Common myeloid progenitor, CD34-positive (primary cell): ENCODE measurements at regions of chr2 and their contacts with region 1.

Region 1: GRCh38 chr2:113138428-113139322 is 11.3 kb downstream of the IL1RN start:
- DNase-seq: peak; percentile 82 to 91 (median 82)
- H3K4me3 ChIP-seq: peak overlapping the region in 3 of 7 experiments; percentile 34 to 57 (median 35)
- H3K27ac ChIP-seq: no peak overlapping the region
- H3K4me1 ChIP-seq: peaks cover 0 to 13% (median 1%) of the 10 kb centered on the region in 4 experiments
- H3K27me3 ChIP-seq: no peaks in the 10 kb centered on the region

Region 2: DNA sequence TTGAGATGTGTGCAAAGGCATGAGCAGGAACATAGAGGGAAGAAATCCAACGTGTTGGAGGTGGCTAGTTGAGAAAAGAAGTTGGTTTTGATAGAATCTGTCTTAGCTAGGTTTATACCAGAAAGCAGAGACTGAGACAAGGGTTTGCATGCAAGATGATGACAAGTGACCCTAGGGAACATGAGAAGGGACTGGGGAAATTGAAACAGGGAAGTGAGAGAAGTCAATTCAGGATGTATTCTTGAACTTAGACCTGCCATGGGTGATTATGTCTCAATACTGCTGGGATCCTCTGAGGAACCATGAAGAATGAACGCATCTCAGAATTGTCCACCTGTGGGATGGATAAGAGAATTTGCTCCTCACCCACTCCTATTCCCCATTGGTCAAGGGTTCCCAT is 112.9 kb before region 1 on chr2:
- CTCF ChIA-PET with region 1: no interaction called
- POLR2A ChIA-PET with region 1: no interaction called
- DNase-seq: no peak
- H3K4me3 ChIP-seq: no peak overlapping the region
- H3K27ac ChIP-seq: no peak overlapping the region
- H3K4me1 ChIP-seq: no peaks in the 10 kb centered on the region
- H3K27me3 ChIP-seq: peaks cover 0 to 10% (median 4%) of the 10 kb centered on the region in 5 experiments

Region 3: DNA sequence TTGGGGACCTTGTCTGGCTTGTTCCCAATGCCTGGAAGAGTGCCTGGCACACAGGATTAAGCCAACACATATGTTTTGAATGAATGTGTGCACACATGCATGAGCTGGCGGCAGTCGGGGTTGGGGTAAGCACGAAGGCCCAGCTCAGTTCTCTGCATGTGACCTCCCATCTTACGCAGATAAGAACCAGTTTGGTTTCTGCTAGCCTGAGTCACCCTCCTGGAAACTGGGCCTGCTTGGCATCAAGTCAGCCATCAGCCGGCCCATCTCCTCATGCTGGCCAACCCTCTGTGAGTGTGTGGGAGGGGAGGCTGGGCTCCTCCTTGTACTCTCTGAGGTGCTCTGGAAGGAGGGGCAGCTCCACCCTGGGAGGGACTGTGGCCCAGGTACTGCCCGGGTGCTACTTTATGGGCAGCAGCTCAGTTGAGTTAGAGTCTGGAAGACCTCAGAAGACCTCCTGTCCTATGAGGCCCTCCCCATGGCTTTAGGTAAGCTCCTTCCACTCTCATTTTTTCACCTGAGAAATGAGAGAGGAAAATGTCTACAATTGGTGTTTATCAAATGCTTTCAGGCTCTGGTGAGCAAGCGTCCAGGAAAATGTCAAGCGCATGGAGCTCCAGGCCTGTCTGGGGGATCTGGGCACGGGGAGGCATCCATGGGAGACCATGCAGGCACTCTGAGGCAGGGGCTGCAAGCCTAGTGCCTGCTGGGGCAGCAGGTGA is 21.0 kb before region 1 on chr2:
- CTCF ChIA-PET with region 1: interaction called, 68 read pairs
- POLR2A ChIA-PET with region 1: no interaction called
- DNase-seq: peak in 2 of 3 donors; percentile 51 to 55
- H3K4me3 ChIP-seq: no peak overlapping the region
- H3K27ac ChIP-seq: no peak overlapping the region
- H3K4me1 ChIP-seq: peaks cover 4 to 54% (median 21%) of the 10 kb centered on the region in 4 experiments
- H3K27me3 ChIP-seq: no peaks in the 10 kb centered on the region

Region 4: DNA sequence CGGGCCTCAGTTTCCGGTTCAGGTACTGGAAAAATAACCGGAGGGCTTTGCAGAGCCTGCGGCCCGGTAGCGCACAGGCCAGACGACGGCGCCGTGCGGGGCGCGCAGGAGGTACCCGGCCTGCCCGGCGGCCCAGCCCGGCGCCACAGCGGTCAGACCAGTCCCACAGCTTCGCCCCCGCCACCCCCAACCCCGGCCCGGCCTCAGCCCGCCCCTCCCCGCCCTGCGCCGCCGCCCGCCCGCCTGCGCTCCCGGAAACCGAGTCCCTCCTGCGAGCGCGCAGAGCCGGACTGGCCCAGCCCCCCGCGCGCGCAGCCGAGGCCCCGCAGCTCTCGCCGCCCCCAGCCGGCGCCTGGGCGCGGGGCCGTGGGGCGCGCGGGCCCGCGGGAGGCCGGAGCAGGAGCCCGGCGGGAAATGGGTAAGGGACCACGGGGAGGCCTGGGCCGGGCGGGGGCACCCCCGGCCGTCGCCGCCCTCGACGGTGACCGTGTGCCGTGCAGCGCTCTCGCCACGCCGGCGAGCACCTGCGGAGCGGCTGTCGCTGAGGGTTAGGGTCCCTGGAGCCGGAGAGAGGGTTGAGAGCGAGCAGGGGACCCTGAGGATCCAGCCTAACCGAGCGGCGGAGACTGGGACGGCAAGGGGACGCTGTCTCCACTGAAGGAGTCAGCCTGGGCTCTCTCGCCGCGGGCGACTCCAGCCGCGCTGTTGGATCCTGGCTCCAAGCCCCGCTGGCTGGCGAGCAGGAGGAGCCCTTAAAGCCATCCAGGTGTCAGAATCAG is 18.6 kb after region 1 on chr2:
- CTCF ChIA-PET with region 1: interaction called, 40 read pairs
- POLR2A ChIA-PET with region 1: no interaction called
- DNase-seq: peak in 2 of 3 donors; percentile 31 to 56
- H3K4me3 ChIP-seq: peak overlapping the region; percentile 40 to 74 (median 69)
- H3K27ac ChIP-seq: no peak overlapping the region
- H3K4me1 ChIP-seq: peaks cover 6 to 14% (median 9%) of the 10 kb centered on the region in 4 experiments
- H3K27me3 ChIP-seq: no peaks in the 10 kb centered on the region

Region 5: GRCh38 chr2:113181258-113182051 is 42.8 kb after region 1 on chr2:
- CTCF ChIA-PET with region 1: interaction called, 93 read pairs
- POLR2A ChIA-PET with region 1: no interaction called
- DNase-seq: peak in 2 of 3 donors; percentile 71 to 82
- H3K4me3 ChIP-seq: peak overlapping the region in 3 of 7 experiments; percentile 9 to 34 (median 15)
- H3K27ac ChIP-seq: no peak overlapping the region
- H3K4me1 ChIP-seq: peaks cover 3 to 44% (median 37%) of the 10 kb centered on the region in 4 experiments
- H3K27me3 ChIP-seq: no peaks in the 10 kb centered on the region

Region 6: DNA sequence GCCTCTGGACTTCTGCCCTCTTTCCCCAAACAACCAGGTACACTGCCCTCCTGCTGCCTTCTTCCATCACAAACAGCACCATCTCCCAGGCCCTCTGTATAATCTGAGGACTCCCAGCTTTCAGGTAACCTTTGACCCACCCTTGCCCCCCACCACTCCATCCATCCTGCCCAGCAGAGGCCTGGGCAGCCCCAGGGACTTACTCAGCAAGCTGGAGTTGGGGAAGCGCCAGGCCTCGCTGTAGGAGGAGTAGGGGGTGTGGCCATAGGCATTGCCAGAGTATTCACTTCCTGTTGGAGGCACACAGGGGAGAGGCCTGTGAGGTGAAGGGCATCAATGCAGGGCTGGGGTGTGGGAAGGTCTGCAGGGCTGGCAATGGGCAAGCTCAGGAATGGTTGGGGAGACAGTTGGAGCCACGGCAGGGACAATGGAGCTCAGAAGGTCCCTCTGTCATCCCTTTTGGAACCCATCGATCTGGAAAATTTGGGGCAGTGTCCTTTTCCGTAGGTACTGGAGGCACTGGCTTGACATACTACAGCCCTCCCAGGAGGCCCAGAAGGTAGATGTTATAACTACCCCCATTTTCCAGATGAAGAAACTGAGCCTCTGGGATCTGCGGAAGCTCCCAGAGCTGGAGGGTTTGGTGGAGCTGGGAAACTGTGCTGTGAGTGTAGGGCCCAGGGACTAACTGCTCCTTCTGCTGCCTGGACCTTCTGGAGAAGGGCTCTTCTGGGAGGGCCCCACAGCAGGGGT is 81.4 kb after region 1 on chr2:
- CTCF ChIA-PET with region 1: interaction called, 12 read pairs
- POLR2A ChIA-PET with region 1: no interaction called
- DNase-seq: peak in 2 of 3 donors; percentile 50 to 54
- H3K4me3 ChIP-seq: no peak overlapping the region
- H3K27ac ChIP-seq: no peak overlapping the region
- H3K4me1 ChIP-seq: peaks cover 17 to 64% (median 58%) of the 10 kb centered on the region in 4 experiments
- H3K27me3 ChIP-seq: no peaks in the 10 kb centered on the region

Region 7: GRCh38 chr2:113376913-113377445 is 238.3 kb after region 1 on chr2:
- CTCF ChIA-PET with region 1: interaction called, 26 read pairs
- POLR2A ChIA-PET with region 1: no interaction called
- DNase-seq: peak; percentile 33 to 60 (median 57)
- H3K4me3 ChIP-seq: no peak overlapping the region
- H3K27ac ChIP-seq: no peak overlapping the region
- H3K4me1 ChIP-seq: peaks cover 2 to 35% (median 19%) of the 10 kb centered on the region in 4 experiments
- H3K27me3 ChIP-seq: no peaks in the 10 kb centered on the region